Right ventricle myocardium inferior (tissue), 1 donor: ENCODE measurements at regions of chr12 and their contacts with region 1.

Region 1: GRCh38 chr12:110253176-110253575 is 27.9 kb upstream of the ATP2A2 start:
- DNase-seq: peak; percentile 87
- ATAC-seq: peak; percentile 77

Region 2: GRCh38 chr12:110176745-110177144 is 76.4 kb before region 1 on chr12:
- intact Hi-C with region 1: no loop called
- DNase-seq: no peak
- ATAC-seq: peak; percentile 48

Region 3: DNA sequence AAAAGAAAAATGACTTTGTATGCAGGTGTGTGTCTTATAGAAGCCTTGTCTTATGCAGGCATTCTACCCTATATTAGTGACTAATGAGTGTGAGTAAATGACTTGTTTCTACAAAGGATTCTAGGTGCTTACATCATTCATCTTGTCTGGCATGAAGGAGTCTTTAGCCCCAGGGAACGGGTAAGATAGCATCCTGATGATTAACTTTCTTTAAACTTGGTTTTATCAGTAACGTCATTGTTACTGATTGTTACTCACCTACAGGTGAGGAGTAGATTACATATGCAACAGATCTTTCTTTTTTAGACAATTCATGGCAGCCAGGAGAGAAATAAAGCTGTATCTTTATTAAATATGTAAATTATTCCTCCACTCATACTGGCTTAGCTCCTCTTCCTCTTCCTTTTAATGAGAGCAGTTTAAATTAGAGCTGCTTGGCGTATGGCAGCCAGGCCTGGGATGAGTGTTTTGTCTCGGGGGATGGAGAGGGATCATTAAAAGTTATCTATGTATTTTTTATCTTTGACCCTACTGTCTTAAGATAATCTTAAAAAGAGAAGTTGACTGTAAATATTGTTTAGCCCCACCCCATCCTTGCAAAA is 29.3 kb before region 1 on chr12:
- intact Hi-C with region 1: no loop called
- DNase-seq: no peak
- ATAC-seq: peak; percentile 24

Region 4: DNA sequence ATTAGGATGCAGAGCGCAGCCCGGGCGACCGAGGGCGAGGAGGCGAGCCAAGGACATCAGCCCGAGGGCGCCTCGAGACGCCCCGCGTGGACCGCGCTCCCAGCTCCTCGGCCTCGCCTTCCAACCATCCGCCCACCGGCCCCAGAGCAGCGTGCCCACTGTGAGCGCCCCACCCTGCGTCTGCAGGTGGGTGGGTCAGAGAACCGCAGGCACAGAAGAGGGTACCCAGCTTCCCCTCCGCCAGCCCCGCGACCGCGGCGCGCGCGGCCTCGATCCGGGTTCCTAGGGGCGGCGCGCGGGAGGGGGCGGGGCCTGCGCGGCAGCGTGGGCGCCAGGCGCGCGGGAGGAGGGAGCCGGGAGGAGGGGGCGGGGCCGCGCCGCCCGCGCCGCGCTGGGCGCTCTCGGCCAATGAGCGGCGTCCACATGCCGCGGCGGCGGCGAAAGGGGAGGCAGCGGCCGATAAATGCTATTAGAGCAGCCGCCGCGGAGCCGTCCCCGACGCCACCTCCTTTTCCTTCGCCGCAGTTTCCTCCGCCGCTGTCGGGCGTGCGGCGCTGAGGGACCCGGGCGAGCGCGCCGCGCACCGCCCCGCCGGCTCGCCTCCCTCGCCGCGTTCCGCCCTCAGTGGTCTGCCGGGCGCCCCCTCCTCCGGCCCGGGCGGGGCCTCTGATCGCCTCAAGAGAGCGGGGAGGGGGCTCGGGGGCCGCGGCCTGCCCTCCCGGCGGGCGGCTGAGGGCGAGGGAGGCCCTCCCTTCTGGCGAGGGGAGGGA is 27.8 kb after region 1 on chr12 and contains the start of gene ATP2A2:
- intact Hi-C with region 1: loop called (anchors 2 kb)
- DNase-seq: peak; percentile 96
- ATAC-seq: peak; percentile 93
- total RNA-seq, gene ATP2A2: 3,009 TPM